ENCODE measurements at regions of chr22 and their contacts with region 1.

Region 1: GRCh38 chr22:36873680-36874537 is 13.1 kb downstream of the NCF4 start:
- DNase-seq: no peak
- H3K4me3 ChIP-seq: no peak overlapping the region
- H3K27ac ChIP-seq: peak overlapping the region; percentile 75 to 87 (median 78)
- H3K4me1 ChIP-seq: peaks cover 13 to 55% (median 32%) of the 10 kb centered on the region in 3 donors
- H3K27me3 ChIP-seq: peaks cover 0 to 31% (median 0%) of the 10 kb centered on the region in 4 donors
- CTCF ChIP-seq: peak in 5 of 6 experiments; percentile 39 to 72 (median 61)
- POLR2A ChIP-seq: no peak

Region 2: GRCh38 chr22:36971341-36972125 is 97.6 kb after region 1 on chr22:
- intact Hi-C with region 1: loop called (anchors 5 kb)
- DNase-seq: no peak
- H3K4me3 ChIP-seq: no peak overlapping the region
- H3K27ac ChIP-seq: no peak overlapping the region
- H3K4me1 ChIP-seq: peaks cover 0 to 12% (median 3%) of the 10 kb centered on the region in 3 donors
- H3K27me3 ChIP-seq: no peaks in the 10 kb centered on the region
- CTCF ChIP-seq: no peak
- POLR2A ChIP-seq: no peak

Region 3: DNA sequence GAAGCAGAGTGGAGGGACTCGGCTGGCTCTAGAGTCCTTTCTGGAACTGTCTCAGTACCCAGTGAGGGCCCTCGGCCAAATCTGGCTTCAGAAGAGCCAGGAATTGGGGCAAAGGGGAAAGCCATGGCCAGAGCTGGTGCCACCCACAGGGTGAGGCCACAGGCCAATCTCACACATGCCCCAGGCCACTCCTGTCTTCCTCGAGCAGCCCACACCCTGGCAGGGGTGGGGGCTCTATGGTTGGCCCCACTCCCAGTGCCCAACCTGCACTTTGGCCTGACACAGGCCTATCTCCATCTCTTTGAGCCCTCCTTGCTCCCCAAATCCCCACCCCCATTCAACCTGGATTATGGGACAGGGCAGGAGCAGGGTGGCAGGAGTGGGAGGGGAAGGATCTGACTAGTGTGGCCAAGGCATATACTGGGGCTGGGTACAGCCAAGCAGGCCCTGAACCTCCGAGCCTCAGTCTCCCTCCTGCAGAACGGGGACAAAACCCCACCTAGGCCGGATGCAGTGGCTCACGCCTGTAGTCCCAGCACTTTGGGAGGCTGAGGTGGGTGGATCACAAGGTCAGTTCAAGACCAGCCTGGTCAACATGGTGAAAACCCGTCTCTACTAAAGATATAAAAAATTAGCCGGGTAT is 138.5 kb after region 1 on chr22:
- intact Hi-C with region 1: no loop called
- DNase-seq: no peak
- H3K4me3 ChIP-seq: no peak overlapping the region
- H3K27ac ChIP-seq: peak overlapping the region in 3 of 4 donors; percentile 44 to 96 (median 51)
- H3K4me1 ChIP-seq: peaks cover 12 to 62% (median 28%) of the 10 kb centered on the region in 3 donors
- H3K27me3 ChIP-seq: no peaks in the 10 kb centered on the region
- CTCF ChIP-seq: no peak
- POLR2A ChIP-seq: no peak